Body of pancreas (tissue), 4 donors: ENCODE measurements at regions of chr10 and their contacts with region 1.

Region 1: GRCh38 chr10:102009801-102010425 is 46.1 kb downstream of the ARMH3 start:
- DNase-seq: peak; percentile 57 to 82 (median 66)
- ATAC-seq: peak; percentile 97
- H3K4me3 ChIP-seq: no peak overlapping the region
- H3K27ac ChIP-seq: no peak overlapping the region
- H3K4me1 ChIP-seq: peaks cover 3% of the 10 kb centered on the region
- H3K27me3 ChIP-seq: no peaks in the 10 kb centered on the region
- CTCF ChIP-seq: peak; percentile 68 to 97 (median 92)
- POLR2A ChIP-seq: no peak

Region 2: GRCh38 chr10:101830322-101831168 is 179.4 kb before region 1 on chr10:
- intact Hi-C with region 1: loop called (anchors 10 kb)
- DNase-seq: peak; percentile 88 to 95 (median 94)
- ATAC-seq: peak; percentile 86
- H3K4me3 ChIP-seq: peak overlapping the region; percentile 14 to 34
- H3K27ac ChIP-seq: peak overlapping the region; percentile 7 to 72 (median 66)
- H3K4me1 ChIP-seq: peaks cover 27% of the 10 kb centered on the region
- H3K27me3 ChIP-seq: no peaks in the 10 kb centered on the region
- CTCF ChIP-seq: peak in 1 of 7 experiments; percentile 17
- POLR2A ChIP-seq: peak in 2 of 3 donors; percentile 23 to 34

Region 3: DNA sequence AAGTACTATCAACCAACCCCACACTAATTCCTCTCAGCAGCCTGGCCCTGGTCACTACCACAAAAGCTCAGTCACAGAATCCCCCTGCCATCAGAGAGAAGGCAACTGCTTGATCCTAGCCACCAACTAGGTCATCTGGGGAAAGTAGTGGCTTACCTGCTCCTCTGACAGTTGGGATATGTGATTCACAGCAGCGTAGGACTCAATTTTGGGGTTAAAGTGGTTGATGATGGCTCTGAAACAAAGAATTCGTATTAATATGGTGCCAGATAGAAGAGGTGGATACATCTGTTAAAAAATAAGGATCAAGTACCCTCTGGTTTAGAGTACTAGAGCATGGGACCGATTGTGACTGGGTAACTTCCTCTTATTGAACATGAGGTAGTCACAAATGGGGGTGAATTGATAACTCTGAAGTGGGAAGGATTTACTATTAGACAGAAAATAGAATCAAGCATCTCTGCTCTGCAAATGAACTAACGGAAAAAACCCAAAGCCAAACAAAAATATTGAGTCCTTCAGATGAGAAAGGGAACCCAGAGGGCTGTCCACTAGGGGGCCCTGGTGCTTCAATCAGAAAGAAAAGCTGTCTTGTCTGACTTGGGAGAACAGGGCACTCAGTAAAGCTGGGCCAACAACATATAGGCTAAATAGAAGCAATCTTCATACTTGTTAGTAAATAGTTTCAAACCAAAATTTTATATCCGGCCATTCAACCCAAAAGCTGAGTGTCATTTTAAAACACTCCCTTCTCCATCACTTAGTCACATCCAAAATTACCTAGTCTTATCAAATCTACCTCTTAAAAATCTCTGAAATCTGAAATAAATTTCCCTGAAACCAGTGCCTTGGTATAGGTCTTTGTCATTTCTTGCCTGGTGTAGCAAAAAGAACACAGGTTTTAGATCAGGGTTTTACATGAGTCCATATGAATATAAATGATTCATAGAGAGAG is 120.4 kb before region 1 on chr10:
- intact Hi-C with region 1: loop called (anchors 10 kb)
- DNase-seq: peak; percentile 59 to 80 (median 72)
- ATAC-seq: no peak
- H3K4me3 ChIP-seq: no peak overlapping the region
- H3K27ac ChIP-seq: no peak overlapping the region
- H3K4me1 ChIP-seq: no peaks in the 10 kb centered on the region
- H3K27me3 ChIP-seq: no peaks in the 10 kb centered on the region
- CTCF ChIP-seq: peak; percentile 37 to 77 (median 64)
- POLR2A ChIP-seq: no peak

Region 4: DNA sequence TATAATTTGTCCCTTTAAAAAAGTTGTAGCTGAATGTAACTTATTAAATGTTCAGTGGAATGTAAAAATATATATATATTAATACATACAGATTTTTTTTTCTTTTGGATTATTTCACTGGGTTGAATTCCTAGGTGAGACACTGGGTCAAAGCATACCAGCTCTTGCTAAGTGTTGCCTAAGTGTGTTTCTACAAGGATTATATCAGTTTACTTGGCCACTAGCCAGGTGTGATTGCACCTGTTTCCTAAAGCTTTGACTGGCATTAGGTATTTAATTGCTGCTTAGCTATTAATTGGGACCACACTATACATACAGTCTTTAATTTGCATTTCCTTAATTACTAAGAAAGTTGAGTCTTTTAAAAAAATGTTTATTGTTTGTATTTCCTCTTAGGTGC is 210.7 kb after region 1 on chr10:
- intact Hi-C with region 1: no loop called
- DNase-seq: no peak
- ATAC-seq: no peak
- H3K4me3 ChIP-seq: no peak overlapping the region
- H3K27ac ChIP-seq: no peak overlapping the region
- H3K4me1 ChIP-seq: peaks cover 1% of the 10 kb centered on the region
- H3K27me3 ChIP-seq: no peaks in the 10 kb centered on the region
- CTCF ChIP-seq: no peak
- POLR2A ChIP-seq: no peak